BJ (cell line): ENCODE measurements at regions of chr10 and their contacts with region 1.

Region 1: GRCh38 chr10:103712570-103713498 is 142.5 kb downstream of the SH3PXD2A start:
- DNase-seq: no peak
- H3K4me3 ChIP-seq: no peak overlapping the region
- H3K27me3 ChIP-seq: no peaks in the 10 kb centered on the region
- CTCF ChIP-seq: peak; percentile 82

Region 2: GRCh38 chr10:103333925-103334520 is 378.8 kb before region 1 on chr10:
- CTCF ChIA-PET with region 1: no interaction called
- POLR2A ChIA-PET with region 1: no interaction called
- DNase-seq: no peak
- H3K4me3 ChIP-seq: no peak overlapping the region
- H3K27me3 ChIP-seq: no peaks in the 10 kb centered on the region
- CTCF ChIP-seq: peak; percentile 54

Region 3: GRCh38 chr10:103560886-103561285 is 151.9 kb before region 1 on chr10:
- CTCF ChIA-PET with region 1: no interaction called
- POLR2A ChIA-PET with region 1: no interaction called
- DNase-seq: no peak
- H3K4me3 ChIP-seq: no peak overlapping the region
- H3K27me3 ChIP-seq: peaks cover 10% of the 10 kb centered on the region
- CTCF ChIP-seq: no peak

Region 4: DNA sequence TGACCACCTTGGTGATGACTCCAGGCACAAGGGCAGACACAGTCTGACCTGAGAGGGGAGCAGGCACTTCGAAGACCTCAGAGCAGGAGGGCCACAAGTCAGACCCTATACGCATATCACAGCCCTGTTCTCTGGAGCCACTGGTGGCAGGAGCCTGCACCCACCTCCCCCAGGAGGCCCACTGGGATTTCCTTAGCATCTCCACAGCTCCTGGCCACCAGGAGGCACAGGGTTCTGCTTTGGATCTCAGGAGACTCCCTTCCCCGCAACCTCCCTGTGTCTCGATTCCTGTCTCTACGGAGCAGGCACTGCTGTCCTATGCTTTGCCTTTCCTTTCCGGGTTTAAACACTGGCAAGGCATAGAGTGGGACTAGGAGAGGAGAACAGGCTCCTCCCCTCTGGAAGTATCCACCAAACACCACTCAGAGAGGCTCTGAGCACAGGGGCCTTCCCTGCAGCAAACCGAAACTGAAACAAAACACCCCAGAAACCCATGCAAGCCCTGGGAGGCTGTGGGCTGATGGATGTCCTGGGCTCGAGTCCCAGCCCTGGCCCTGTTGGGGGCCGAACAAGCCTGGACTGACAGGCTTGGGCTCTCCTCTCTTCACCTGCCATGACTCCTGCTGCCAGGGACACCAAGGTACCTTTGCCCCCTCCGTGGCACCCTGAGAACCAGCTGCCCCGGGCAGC is 53.0 kb before region 1 on chr10:
- CTCF ChIA-PET with region 1: no interaction called
- POLR2A ChIA-PET with region 1: no interaction called
- DNase-seq: peak; percentile 61
- H3K4me3 ChIP-seq: peak overlapping the region; percentile 81
- H3K27me3 ChIP-seq: no peaks in the 10 kb centered on the region
- CTCF ChIP-seq: peak; percentile 35

Region 5: DNA sequence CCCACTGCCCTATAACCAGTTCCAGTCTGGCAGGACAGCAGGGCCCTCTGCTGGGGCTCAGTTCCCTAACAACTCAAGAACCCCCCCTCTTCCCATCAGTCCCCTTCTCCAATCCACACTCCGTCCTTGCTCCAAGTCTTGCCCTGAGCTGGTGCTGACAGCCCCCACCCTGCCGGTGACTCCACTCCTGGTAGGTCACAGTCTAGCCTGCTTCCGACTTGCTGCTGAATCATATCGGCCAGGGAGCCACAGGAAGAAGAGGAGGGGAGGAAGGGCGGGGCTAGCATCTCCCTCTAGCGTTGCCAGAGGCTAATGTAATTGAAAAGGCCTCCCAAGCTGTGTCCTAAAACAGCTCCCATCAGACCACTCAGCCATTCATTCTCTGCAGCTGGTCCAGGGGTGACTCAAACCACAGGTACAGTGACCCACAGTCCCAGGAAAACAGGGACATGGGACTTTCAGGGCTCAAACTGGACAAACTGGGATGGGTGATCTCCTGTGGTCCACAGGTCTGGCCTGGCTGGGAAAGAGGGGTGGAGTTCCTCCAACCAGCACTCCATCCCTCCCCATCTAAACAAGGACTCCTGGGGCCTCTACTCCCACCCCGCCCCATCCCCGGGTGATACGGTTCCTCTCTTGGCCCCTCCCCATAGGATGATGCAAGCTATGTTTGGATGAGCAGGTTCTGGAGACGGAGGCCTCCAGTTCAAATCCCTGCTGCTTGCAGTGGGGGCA is 16.3 kb before region 1 on chr10:
- CTCF ChIA-PET with region 1: interaction called, 10 read pairs
- POLR2A ChIA-PET with region 1: no interaction called
- DNase-seq: peak; percentile 77
- H3K4me3 ChIP-seq: no peak overlapping the region
- H3K27me3 ChIP-seq: no peaks in the 10 kb centered on the region
- CTCF ChIP-seq: peak; percentile 71

Region 6: GRCh38 chr10:103847909-103848468 is 135.2 kb after region 1 on chr10:
- CTCF ChIA-PET with region 1: interaction called, 160 read pairs
- POLR2A ChIA-PET with region 1: interaction called, 27 read pairs
- DNase-seq: no peak
- H3K4me3 ChIP-seq: no peak overlapping the region
- H3K27me3 ChIP-seq: no peaks in the 10 kb centered on the region
- CTCF ChIP-seq: peak; percentile 34

Region 7: DNA sequence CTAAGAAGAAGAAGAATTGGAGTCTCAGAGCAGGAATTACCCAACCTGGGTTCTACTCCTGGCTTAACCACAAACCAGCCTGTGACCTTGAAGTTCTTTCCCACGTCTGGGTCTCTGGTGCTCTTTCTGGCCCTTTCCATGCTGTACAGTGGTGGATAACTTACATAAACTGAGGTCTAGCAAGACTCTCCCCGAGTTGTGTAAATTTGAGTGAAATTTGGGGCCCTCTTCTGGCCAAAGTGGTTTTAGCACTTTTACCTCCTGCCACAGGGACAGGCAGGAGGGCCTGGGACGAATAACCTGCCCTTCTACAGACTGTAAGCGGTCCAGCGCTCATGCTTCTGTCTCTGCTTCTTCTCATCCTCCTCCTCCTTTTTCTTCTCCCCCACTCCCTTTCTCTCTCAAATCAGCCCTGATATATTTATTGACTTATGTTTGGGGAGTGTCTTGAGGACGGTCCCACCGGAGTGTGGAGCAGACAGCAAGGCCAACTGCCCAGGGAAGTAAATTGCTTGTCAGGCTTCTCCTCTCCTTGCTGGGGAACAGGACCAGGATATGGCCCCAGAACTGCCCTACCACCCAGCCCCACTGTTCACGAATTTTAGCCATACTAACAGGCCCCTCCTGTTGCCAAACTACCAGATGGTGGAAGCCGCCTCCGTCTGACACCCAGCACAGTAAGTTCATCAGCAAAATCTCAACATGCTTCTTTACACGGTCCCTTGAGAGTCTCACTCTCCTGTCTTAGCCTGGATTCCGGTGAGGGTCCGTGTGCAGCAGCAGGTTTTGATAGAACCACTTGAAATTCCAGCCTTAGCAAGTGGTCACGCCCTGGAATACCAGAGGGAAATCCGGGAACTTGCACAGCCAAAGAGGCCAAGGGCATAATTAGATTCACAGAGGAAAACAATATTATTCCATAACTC is 146.6 kb after region 1 on chr10:
- CTCF ChIA-PET with region 1: interaction called, 160 read pairs
- POLR2A ChIA-PET with region 1: no interaction called
- DNase-seq: no peak
- H3K4me3 ChIP-seq: no peak overlapping the region
- H3K27me3 ChIP-seq: no peaks in the 10 kb centered on the region
- CTCF ChIP-seq: peak; percentile 71

Region 8: GRCh38 chr10:103870516-103870915 is 157.7 kb after region 1 on chr10:
- CTCF ChIA-PET with region 1: interaction called, 43 read pairs
- POLR2A ChIA-PET with region 1: no interaction called
- DNase-seq: peak; percentile 81
- H3K4me3 ChIP-seq: no peak overlapping the region
- H3K27me3 ChIP-seq: no peaks in the 10 kb centered on the region
- CTCF ChIP-seq: peak; percentile 36

Region 9: DNA sequence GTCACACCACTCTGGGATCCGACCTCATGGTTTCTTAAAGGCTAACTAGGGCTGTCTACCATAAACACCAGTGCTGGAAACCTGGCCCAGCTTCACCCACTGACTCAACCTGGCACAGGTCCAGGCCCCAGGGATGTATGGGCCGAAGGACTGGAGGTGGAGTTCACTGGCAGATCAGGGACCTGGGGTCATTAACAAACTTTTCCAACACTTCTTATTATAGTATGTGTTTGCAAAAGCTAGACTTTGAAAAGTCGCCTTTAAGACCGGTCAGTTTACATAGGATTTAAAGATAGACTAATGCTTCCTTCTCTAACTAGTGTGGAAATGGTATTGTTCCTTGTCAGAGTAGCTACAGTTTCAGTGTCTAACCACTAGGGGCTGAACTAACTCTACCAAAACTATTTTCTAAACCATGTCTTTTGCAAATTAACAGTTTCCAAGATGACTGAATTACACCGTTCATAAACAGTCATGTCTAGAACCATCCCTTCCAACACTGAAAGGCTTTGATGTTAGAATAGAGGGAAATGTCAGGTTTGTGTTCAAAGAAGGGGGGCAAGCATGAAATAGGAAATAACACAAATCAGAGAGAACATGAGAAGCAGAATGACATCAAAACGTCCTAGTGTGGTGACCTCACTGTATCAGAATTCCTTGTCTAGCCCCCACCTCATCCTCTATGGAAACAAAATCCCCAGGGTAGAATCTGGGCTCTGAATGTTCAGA is 175.4 kb after region 1 on chr10:
- CTCF ChIA-PET with region 1: interaction called, 138 read pairs
- POLR2A ChIA-PET with region 1: no interaction called
- DNase-seq: peak; percentile 31
- H3K4me3 ChIP-seq: no peak overlapping the region
- H3K27me3 ChIP-seq: no peaks in the 10 kb centered on the region
- CTCF ChIP-seq: peak; percentile 77